ENCODE measurements at regions of chrX and their contacts with region 1.

Region 1: GRCh38 chrX:39814391-39814790 is 283.4 kb downstream of the BCOR start:
- DNase-seq: peak in 6 of 9 donors; percentile 17 to 46 (median 32)
- ATAC-seq: peak; percentile 75
- H3K4me3 ChIP-seq: no peak overlapping the region
- H3K4me3 Mint-ChIP-seq: no peak overlapping the region
- H3K27ac ChIP-seq: no peak overlapping the region
- H3K27ac Mint-ChIP-seq: no peak overlapping the region
- H3K4me1 ChIP-seq: no peaks in the 10 kb centered on the region
- H3K4me1 Mint-ChIP-seq: peaks cover 0 to 36% (median 12%) of the 10 kb centered on the region in 7 donors
- H3K27me3 ChIP-seq: no peaks in the 10 kb centered on the region
- H3K27me3 Mint-ChIP-seq: no peaks in the 10 kb centered on the region

Region 2: DNA sequence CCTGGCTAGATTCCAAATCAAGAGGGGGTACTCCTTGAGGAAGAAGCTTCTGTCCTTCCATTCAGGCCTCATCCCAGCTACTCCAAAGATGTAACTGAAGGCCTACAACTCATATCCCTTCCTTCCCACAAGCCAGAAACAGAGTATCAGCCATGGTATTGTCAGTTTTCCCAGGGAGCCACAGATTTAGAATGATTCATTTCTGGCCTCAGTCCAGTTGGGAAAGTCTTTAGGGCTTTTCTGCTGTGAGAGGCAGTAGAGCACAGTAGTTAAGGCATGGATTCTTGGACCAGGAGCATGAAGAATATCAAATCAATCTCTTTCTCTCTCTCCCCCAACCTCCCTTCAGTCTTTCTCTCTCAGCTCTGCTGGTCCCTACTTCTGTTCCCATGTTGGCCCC is 221.6 kb before region 1 on chrX:
- CTCF ChIA-PET with region 1: no interaction called
- POLR2A ChIA-PET with region 1: no interaction called
- intact Hi-C with region 1: no loop called
- DNase-seq: no peak
- ATAC-seq: no peak
- H3K4me3 ChIP-seq: no peak overlapping the region
- H3K4me3 Mint-ChIP-seq: no peak overlapping the region
- H3K27ac ChIP-seq: no peak overlapping the region
- H3K27ac Mint-ChIP-seq: no peak overlapping the region
- H3K4me1 ChIP-seq: no peaks in the 10 kb centered on the region
- H3K4me1 Mint-ChIP-seq: peaks cover 0 to 1% (median 0%) of the 10 kb centered on the region in 7 donors
- H3K27me3 ChIP-seq: no peaks in the 10 kb centered on the region
- H3K27me3 Mint-ChIP-seq: no peaks in the 10 kb centered on the region

Region 3: GRCh38 chrX:39730662-39731397 is 83.6 kb before region 1 on chrX:
- CTCF ChIA-PET with region 1: no interaction called
- POLR2A ChIA-PET with region 1: interaction called, 3 read pairs
- intact Hi-C with region 1: loop called (anchors 2 to 5 kb)
- DNase-seq: peak; percentile 15 to 59 (median 47)
- ATAC-seq: peak; percentile 80
- H3K4me3 ChIP-seq: no peak overlapping the region
- H3K4me3 Mint-ChIP-seq: peak overlapping the region in 8 of 10 donors; percentile 30 to 76 (median 50)
- H3K27ac ChIP-seq: no peak overlapping the region
- H3K27ac Mint-ChIP-seq: peak overlapping the region in 6 of 9 donors; percentile 53 to 90 (median 76)
- H3K4me1 ChIP-seq: no peaks in the 10 kb centered on the region
- H3K4me1 Mint-ChIP-seq: peaks cover 0 to 15% (median 4%) of the 10 kb centered on the region in 7 donors
- H3K27me3 ChIP-seq: no peaks in the 10 kb centered on the region
- H3K27me3 Mint-ChIP-seq: no peaks in the 10 kb centered on the region

Region 4: DNA sequence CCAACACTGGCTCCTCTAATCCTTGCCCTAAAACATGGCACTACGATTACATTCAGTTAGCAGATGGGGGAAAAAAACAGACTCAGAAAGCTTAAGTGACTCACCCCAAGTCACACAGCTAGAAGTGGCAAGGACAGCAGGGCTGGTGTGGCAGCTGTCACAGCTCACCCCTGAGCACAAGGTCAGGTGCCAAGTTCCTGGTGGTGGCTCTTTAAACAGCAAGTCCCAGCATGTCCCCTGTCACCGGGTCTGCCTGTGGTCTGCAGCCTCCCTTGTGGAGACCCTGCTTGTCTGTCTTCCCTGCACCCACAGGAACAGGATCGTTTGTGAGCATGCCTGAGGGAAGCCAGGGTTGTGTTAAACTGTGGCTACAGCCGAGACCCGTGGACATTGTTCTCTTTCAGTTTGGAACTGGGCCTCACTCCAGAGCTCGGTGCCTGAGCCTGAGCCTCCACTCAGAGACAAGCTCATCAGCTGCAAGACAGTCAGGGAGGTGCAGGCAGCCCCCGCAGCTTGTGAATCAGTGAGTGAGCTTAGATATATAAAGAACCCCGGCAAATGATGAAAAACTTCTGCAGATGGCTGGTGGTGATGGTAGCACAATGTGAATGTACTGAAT is 22.5 kb after region 1 on chrX:
- CTCF ChIA-PET with region 1: no interaction called
- POLR2A ChIA-PET with region 1: no interaction called
- intact Hi-C with region 1: no loop called
- DNase-seq: no peak
- ATAC-seq: no peak
- H3K4me3 ChIP-seq: no peak overlapping the region
- H3K4me3 Mint-ChIP-seq: no peak overlapping the region
- H3K27ac ChIP-seq: no peak overlapping the region
- H3K27ac Mint-ChIP-seq: no peak overlapping the region
- H3K4me1 ChIP-seq: no peaks in the 10 kb centered on the region
- H3K4me1 Mint-ChIP-seq: peaks cover 0 to 2% (median 0%) of the 10 kb centered on the region in 7 donors
- H3K27me3 ChIP-seq: no peaks in the 10 kb centered on the region
- H3K27me3 Mint-ChIP-seq: no peaks in the 10 kb centered on the region

Region 5: GRCh38 chrX:40013266-40014195 is 199.1 kb after region 1 on chrX:
- CTCF ChIA-PET with region 1: no interaction called
- POLR2A ChIA-PET with region 1: no interaction called
- intact Hi-C with region 1: loop called (anchors 5 kb)
- DNase-seq: peak in 2 of 9 donors; percentile 18 to 53
- ATAC-seq: peak; percentile 42
- H3K4me3 ChIP-seq: peak overlapping the region; percentile 51
- H3K4me3 Mint-ChIP-seq: peak overlapping the region; percentile 70 to 87 (median 75)
- H3K27ac ChIP-seq: no peak overlapping the region
- H3K27ac Mint-ChIP-seq: peak overlapping the region in 2 of 9 donors; percentile 43 to 83
- H3K4me1 ChIP-seq: peaks cover 0 to 31% of the 10 kb centered on the region in 2 donors
- H3K4me1 Mint-ChIP-seq: peaks cover 5 to 35% (median 24%) of the 10 kb centered on the region in 7 donors
- H3K27me3 ChIP-seq: no peaks in the 10 kb centered on the region
- H3K27me3 Mint-ChIP-seq: peaks cover 0 to 24% (median 0%) of the 10 kb centered on the region in 5 donors

Region 6: GRCh38 chrX:40068044-40068443 is 253.7 kb after region 1 on chrX:
- CTCF ChIA-PET with region 1: no interaction called
- POLR2A ChIA-PET with region 1: no interaction called
- intact Hi-C with region 1: loop called (anchors 1 to 5 kb)
- DNase-seq: peak in 2 of 9 donors; percentile 35 to 39
- ATAC-seq: peak; percentile 75
- H3K4me3 ChIP-seq: no peak overlapping the region
- H3K4me3 Mint-ChIP-seq: peak overlapping the region in 2 of 10 donors; percentile 11 to 12
- H3K27ac ChIP-seq: no peak overlapping the region
- H3K27ac Mint-ChIP-seq: peak overlapping the region in 8 of 9 donors; percentile 19 to 81 (median 40)
- H3K4me1 ChIP-seq: peaks cover 0 to 33% of the 10 kb centered on the region in 2 donors
- H3K4me1 Mint-ChIP-seq: peaks cover 22 to 71% (median 65%) of the 10 kb centered on the region in 7 donors
- H3K27me3 ChIP-seq: no peaks in the 10 kb centered on the region
- H3K27me3 Mint-ChIP-seq: no peaks in the 10 kb centered on the region

Region 7: DNA sequence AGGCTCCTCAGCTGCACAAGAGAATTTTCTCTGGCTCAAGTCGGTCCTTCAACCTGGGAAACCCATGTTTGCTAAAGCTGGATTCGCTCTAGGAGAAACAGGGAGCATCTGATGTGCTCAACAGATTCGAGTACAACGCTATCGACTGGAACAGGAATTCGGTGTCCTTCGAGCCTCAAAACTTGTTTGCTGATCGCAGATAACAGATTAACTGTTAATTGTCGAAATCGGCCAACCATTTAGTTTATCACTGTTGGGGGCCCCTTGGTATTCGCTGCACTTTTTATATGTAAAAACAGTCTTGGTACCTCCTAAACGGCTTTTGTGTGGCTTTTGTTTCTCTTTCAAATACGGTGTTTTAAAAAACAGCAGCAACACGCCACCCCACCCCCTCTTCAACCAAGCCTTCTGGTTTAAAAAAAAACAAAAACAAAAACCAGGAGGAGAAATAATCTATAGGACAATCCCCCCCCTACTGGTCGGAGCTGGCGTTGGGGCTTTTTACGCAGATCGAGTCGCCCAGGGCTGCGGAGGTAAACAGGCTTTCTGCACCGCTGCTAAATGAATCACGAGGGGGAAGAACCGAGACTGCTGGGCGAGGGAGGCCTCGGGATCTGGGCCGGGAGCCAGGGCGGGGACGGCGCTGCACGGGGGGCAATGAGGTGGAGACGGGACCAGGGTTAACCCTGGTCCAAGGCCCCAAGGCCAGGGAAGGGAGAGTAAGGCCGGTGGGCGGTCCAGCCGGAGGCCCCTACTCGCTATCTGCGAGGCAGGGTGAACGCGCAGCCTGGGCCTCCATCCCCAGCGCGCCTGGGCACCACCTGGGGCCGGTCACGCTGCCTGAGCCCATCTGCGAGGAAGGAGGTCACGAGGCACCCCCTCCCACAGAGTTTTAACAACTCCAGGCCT is 355.1 kb after region 1 on chrX:
- CTCF ChIA-PET with region 1: no interaction called
- POLR2A ChIA-PET with region 1: interaction called, 3 read pairs
- intact Hi-C with region 1: loop called (anchors 1 kb)
- DNase-seq: peak in 8 of 9 donors; percentile 65 to 81 (median 74)
- ATAC-seq: peak; percentile 79
- H3K4me3 ChIP-seq: peak overlapping the region; percentile 51
- H3K4me3 Mint-ChIP-seq: peak overlapping the region; percentile 86 to 94 (median 90)
- H3K27ac ChIP-seq: peak overlapping the region; percentile 98
- H3K27ac Mint-ChIP-seq: peak overlapping the region; percentile 96 to 99 (median 98)
- H3K4me1 ChIP-seq: peaks cover 14 to 31% of the 10 kb centered on the region in 2 donors
- H3K4me1 Mint-ChIP-seq: peaks cover 17 to 64% (median 40%) of the 10 kb centered on the region in 7 donors
- H3K27me3 ChIP-seq: no peaks in the 10 kb centered on the region
- H3K27me3 Mint-ChIP-seq: no peaks in the 10 kb centered on the region

Region 8: DNA sequence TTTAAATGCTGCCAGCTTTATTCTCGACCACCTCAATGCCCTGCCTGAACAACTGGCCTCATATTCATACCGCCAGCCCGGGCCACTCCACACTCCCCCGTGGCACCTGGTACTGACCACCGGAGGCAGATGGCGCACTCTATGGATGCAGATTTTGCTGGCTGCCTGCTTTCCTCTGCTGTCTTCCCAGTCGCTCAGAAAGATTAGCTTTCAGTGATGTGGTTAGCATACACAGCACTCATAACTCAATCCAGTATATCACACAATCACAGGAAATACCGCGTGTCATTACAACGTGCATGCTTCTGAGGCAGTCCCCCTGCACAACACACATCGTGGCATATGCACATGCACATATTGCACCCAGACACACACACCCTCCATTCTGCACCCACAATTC is 430.6 kb after region 1 on chrX:
- CTCF ChIA-PET with region 1: no interaction called
- POLR2A ChIA-PET with region 1: no interaction called
- intact Hi-C with region 1: loop called in 1 of 2 experiments (anchors 1 kb)
- DNase-seq: peak in 6 of 9 donors; percentile 9 to 37 (median 19)
- ATAC-seq: peak; percentile 45
- H3K4me3 ChIP-seq: no peak overlapping the region
- H3K4me3 Mint-ChIP-seq: peak overlapping the region; percentile 3 to 75 (median 26)
- H3K27ac ChIP-seq: no peak overlapping the region
- H3K27ac Mint-ChIP-seq: peak overlapping the region in 1 of 9 donors; percentile 21
- H3K4me1 ChIP-seq: peaks cover 0 to 13% of the 10 kb centered on the region in 2 donors
- H3K4me1 Mint-ChIP-seq: peaks cover 6 to 14% (median 13%) of the 10 kb centered on the region in 7 donors
- H3K27me3 ChIP-seq: no peaks in the 10 kb centered on the region
- H3K27me3 Mint-ChIP-seq: peaks cover 0 to 6% (median 2%) of the 10 kb centered on the region in 5 donors

Region 9: DNA sequence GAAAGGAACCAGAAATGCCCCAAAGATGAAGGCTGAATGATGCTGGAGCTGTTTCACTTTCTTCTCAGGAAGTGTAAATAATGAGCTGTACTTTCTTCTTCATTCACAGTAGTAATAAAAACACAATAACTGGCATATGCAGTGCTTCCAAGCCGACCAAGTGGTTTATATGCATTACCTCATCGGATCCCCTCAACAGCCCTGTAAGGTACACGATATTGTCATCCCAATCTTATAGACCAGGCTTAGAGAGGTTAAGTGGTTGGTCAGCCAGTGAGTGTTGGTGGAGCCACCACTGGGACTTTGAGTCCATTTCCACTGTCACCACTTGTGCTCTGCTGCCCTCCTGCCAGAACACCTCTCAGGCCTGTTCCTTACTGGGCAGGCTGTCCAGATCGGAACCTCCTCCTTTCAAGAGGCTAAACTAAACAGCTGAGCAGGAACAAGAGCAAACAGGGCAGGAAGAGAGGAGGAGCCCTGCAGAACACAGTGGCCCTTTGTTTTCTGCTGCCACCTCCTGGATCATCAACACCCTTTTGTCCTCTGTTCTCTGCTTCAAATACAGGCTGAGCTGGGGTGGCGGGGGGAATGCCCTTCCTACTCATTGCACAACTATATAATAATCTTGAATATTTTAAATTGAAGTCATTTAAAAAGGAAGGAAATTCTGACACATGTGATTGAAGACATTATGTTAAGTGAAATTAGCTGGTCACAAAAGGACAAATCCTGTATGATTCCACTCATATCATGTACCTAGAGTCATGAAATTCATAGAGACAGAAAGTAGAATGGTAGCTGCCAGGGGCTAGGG is 653.8 kb after region 1 on chrX:
- CTCF ChIA-PET with region 1: interaction called, 3 read pairs
- POLR2A ChIA-PET with region 1: no interaction called
- intact Hi-C with region 1: loop called (anchors 2 kb)
- DNase-seq: peak in 5 of 9 donors; percentile 22 to 40 (median 31)
- ATAC-seq: peak; percentile 72
- H3K4me3 ChIP-seq: no peak overlapping the region
- H3K4me3 Mint-ChIP-seq: peak overlapping the region in 6 of 10 donors; percentile 8 to 73 (median 38)
- H3K27ac ChIP-seq: no peak overlapping the region
- H3K27ac Mint-ChIP-seq: peak overlapping the region in 2 of 9 donors; percentile 14 to 69
- H3K4me1 ChIP-seq: peaks cover 0 to 13% of the 10 kb centered on the region in 2 donors
- H3K4me1 Mint-ChIP-seq: peaks cover 14 to 40% (median 33%) of the 10 kb centered on the region in 7 donors
- H3K27me3 ChIP-seq: no peaks in the 10 kb centered on the region
- H3K27me3 Mint-ChIP-seq: no peaks in the 10 kb centered on the region

Measured in naive thymus-derived CD4-positive, alpha-beta T cell (primary cell).